ENCODE measurements at regions of chr20 and their contacts with region 1.

Region 1: GRCh38 chr20:50380641-50381040 is 129.5 kb upstream of the PTPN1 start:
- DNase-seq: no peak
- ATAC-seq: no peak
- H3K4me3 ChIP-seq: no peak overlapping the region
- H3K4me3 Mint-ChIP-seq: no peak overlapping the region
- H3K27ac ChIP-seq: no peak overlapping the region
- H3K27ac Mint-ChIP-seq: peak overlapping the region; percentile 71
- H3K4me1 ChIP-seq: peaks cover 44% of the 10 kb centered on the region
- H3K4me1 Mint-ChIP-seq: peaks cover 49% of the 10 kb centered on the region
- H3K27me3 ChIP-seq: no peaks in the 10 kb centered on the region
- H3K27me3 Mint-ChIP-seq: no peaks in the 10 kb centered on the region
- CTCF ChIP-seq: no peak

Region 2: GRCh38 chr20:49951151-49951550 is 429.5 kb before region 1 on chr20:
- CTCF ChIA-PET with region 1: no interaction called
- POLR2A ChIA-PET with region 1: no interaction called
- intact Hi-C with region 1: no loop called
- DNase-seq: no peak
- ATAC-seq: no peak
- H3K4me3 ChIP-seq: no peak overlapping the region
- H3K4me3 Mint-ChIP-seq: no peak overlapping the region
- H3K27ac ChIP-seq: no peak overlapping the region
- H3K27ac Mint-ChIP-seq: no peak overlapping the region
- H3K4me1 ChIP-seq: no peaks in the 10 kb centered on the region
- H3K4me1 Mint-ChIP-seq: peaks cover 5% of the 10 kb centered on the region
- H3K27me3 ChIP-seq: no peaks in the 10 kb centered on the region
- H3K27me3 Mint-ChIP-seq: no peaks in the 10 kb centered on the region
- CTCF ChIP-seq: no peak

Region 3: DNA sequence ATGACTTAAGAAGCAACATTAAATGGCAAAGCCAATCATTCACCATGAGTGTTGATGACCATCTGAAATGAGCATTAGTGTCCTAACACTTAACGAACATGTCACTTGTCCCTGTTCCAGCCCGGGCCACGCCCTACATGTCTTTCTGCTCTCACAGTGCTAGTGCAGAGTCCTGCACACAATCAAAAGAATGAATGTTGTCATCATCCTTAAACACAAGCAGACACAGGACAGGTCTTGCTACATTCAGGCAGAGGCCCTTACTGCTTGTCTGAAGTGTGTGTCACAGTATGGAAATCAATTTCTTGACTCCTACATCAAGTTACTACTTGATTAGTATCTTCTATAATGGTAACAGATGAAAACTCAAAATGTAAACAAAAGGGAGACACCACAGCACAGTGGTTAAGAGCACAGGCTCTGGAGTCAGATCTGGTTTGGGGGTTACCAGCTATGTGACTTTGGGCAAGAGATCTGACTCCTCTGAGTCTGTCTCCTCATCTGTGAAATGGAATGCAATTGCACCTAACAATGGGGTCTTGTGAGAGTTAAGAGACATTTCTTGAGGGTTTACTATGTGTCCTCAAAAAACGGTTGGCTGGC is 285.1 kb before region 1 on chr20:
- CTCF ChIA-PET with region 1: no interaction called
- POLR2A ChIA-PET with region 1: no interaction called
- intact Hi-C with region 1: no loop called
- DNase-seq: no peak
- ATAC-seq: no peak
- H3K4me3 ChIP-seq: no peak overlapping the region
- H3K4me3 Mint-ChIP-seq: no peak overlapping the region
- H3K27ac ChIP-seq: no peak overlapping the region
- H3K27ac Mint-ChIP-seq: peak overlapping the region; percentile 66
- H3K4me1 ChIP-seq: peaks cover 12% of the 10 kb centered on the region
- H3K4me1 Mint-ChIP-seq: peaks cover 45% of the 10 kb centered on the region
- H3K27me3 ChIP-seq: no peaks in the 10 kb centered on the region
- H3K27me3 Mint-ChIP-seq: no peaks in the 10 kb centered on the region
- CTCF ChIP-seq: no peak

Region 4: DNA sequence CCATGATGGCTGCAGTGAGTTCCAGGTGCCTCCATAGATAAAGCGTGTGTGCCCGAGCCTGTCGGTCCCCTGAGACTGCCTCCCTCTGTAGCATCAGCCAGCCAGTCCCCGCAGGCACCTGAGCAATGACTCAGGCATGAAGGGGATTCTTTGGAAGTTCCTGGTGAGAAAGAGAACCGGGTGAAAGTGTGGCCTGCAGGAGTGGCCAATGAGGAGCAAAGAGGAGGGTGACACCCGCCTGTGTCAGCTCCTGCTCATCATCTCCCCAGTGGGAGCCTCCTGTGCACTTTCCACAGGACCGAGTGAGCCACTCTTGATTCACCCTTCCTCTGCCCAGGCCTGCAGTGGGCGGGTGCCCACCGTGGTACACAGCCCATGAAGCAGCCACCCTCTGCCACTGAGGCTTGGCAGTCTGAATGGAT is 58.4 kb after region 1 on chr20:
- CTCF ChIA-PET with region 1: no interaction called
- POLR2A ChIA-PET with region 1: no interaction called
- intact Hi-C with region 1: loop called in 1 of 2 experiments (anchors 10 kb)
- DNase-seq: peak in 2 of 14 experiments; percentile 36 to 62
- ATAC-seq: no peak
- H3K4me3 ChIP-seq: no peak overlapping the region
- H3K4me3 Mint-ChIP-seq: no peak overlapping the region
- H3K27ac ChIP-seq: no peak overlapping the region
- H3K27ac Mint-ChIP-seq: no peak overlapping the region
- H3K4me1 ChIP-seq: no peaks in the 10 kb centered on the region
- H3K4me1 Mint-ChIP-seq: no peaks in the 10 kb centered on the region
- H3K27me3 ChIP-seq: no peaks in the 10 kb centered on the region
- H3K27me3 Mint-ChIP-seq: no peaks in the 10 kb centered on the region
- CTCF ChIP-seq: no peak

Region 5: GRCh38 chr20:50498081-50498776 is 117.6 kb after region 1 on chr20:
- CTCF ChIA-PET with region 1: no interaction called
- POLR2A ChIA-PET with region 1: no interaction called
- intact Hi-C with region 1: no loop called
- DNase-seq: peak in 2 of 14 experiments; percentile 51 to 61
- ATAC-seq: no peak
- H3K4me3 ChIP-seq: no peak overlapping the region
- H3K4me3 Mint-ChIP-seq: no peak overlapping the region
- H3K27ac ChIP-seq: no peak overlapping the region
- H3K27ac Mint-ChIP-seq: no peak overlapping the region
- H3K4me1 ChIP-seq: peaks cover 3% of the 10 kb centered on the region
- H3K4me1 Mint-ChIP-seq: no peaks in the 10 kb centered on the region
- H3K27me3 ChIP-seq: no peaks in the 10 kb centered on the region
- H3K27me3 Mint-ChIP-seq: no peaks in the 10 kb centered on the region
- CTCF ChIP-seq: no peak

Region 6: GRCh38 chr20:50996901-50997865 is 616.5 kb after region 1 on chr20:
- CTCF ChIA-PET with region 1: no interaction called
- POLR2A ChIA-PET with region 1: no interaction called
- intact Hi-C with region 1: no loop called
- DNase-seq: no peak
- ATAC-seq: no peak
- H3K4me3 ChIP-seq: no peak overlapping the region
- H3K4me3 Mint-ChIP-seq: no peak overlapping the region
- H3K27ac ChIP-seq: no peak overlapping the region
- H3K27ac Mint-ChIP-seq: no peak overlapping the region
- H3K4me1 ChIP-seq: no peaks in the 10 kb centered on the region
- H3K4me1 Mint-ChIP-seq: no peaks in the 10 kb centered on the region
- H3K27me3 ChIP-seq: peaks cover 0 to 8% of the 10 kb centered on the region in 2 experiments
- H3K27me3 Mint-ChIP-seq: peaks cover 33% of the 10 kb centered on the region
- CTCF ChIP-seq: no peak